ENCODE measurements at regions of chrX and their contacts with region 1.

Region 1: GRCh38 chrX:68415316-68415715 is 18.0 kb downstream of the OPHN1 start:
- DNase-seq: peak; percentile 54 to 72
- ATAC-seq: peak; percentile 93 to 96
- H3K4me3 ChIP-seq: no peak overlapping the region
- H3K27ac ChIP-seq: peak overlapping the region; percentile 33 to 62 (median 47)
- H3K4me1 ChIP-seq: peaks cover 9 to 30% of the 10 kb centered on the region in 2 donors
- H3K27me3 ChIP-seq: no peaks in the 10 kb centered on the region
- CTCF ChIP-seq: no peak
- POLR2A ChIP-seq: no peak

Region 2: DNA sequence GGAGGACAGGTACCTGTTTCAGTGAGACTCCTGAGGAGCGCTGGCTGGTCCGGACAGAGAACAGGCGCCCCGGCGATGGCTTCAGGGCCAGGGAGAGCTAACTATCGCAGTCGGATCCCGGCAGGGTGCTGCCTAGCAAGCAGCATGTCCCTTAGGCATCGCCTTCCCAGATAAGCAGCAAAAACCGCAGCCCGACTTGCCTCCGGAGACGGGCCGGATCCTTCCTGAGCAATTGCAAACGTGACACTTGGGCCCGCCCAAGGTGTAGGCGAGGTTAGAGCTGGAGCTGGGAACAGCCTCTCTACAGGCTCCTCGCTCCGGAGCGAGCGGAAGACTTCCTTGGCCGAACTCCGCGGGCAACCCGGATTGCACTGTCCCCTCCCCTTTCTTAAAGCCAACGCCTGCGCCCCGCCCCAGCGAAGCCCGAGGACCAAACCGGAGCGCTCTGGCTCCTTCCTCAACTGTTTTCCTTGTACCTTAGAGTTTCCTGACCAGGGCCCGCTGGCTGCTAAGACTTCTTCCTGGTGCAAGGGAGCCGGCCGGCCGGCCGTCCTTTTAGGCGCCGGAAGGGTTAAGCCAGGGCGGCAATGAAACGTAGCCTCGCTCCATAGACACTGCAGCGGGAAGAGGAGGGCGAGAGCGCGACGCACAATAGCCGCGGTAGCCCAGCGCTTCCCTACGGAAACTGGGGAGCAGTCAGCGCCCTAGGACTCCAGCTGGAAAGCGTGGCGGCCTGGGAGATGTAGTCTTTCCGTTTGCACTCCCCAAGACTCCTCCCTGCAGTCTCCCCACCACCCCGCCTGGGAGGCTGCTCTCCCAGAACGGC is 18.1 kb after region 1 on chrX and contains the start of gene OPHN1:
- in situ Hi-C with region 1: no loop called
- intact Hi-C with region 1: loop called (anchors 2 kb)
- DNase-seq: peak; percentile 65 to 72
- ATAC-seq: peak; percentile 94 to 97
- H3K4me3 ChIP-seq: peak within 1 kb of the TSS; percentile 61 to 77 (median 72)
- H3K27ac ChIP-seq: peak within 1 kb of the TSS; percentile 83 to 91 (median 86)
- H3K4me1 ChIP-seq: peaks cover 0 to 3% of the 10 kb centered on the region in 2 donors
- H3K27me3 ChIP-seq: no peaks in the 10 kb centered on the region
- CTCF ChIP-seq: no peak
- POLR2A ChIP-seq: peak; percentile 28 to 35
- total RNA-seq, gene OPHN1: 2.3 to 10.8 (median 4.6) TPM

Region 3: GRCh38 chrX:68693481-68694434 is 278.4 kb after region 1 on chrX:
- in situ Hi-C with region 1: no loop called
- intact Hi-C with region 1: loop called (anchors 10 kb)
- DNase-seq: peak; percentile 48 to 61
- ATAC-seq: peak; percentile 53 to 82
- H3K4me3 ChIP-seq: peak overlapping the region; percentile 65 to 82 (median 73)
- H3K27ac ChIP-seq: peak overlapping the region; percentile 85 to 92 (median 86)
- H3K4me1 ChIP-seq: peaks cover 3 to 5% of the 10 kb centered on the region in 2 donors
- H3K27me3 ChIP-seq: no peaks in the 10 kb centered on the region
- CTCF ChIP-seq: no peak
- POLR2A ChIP-seq: peak; percentile 68 to 79

Measured in gastrocnemius medialis (tissue), 4 donors.